Adrenal gland (tissue), 19 donors: ENCODE measurements at regions of chr5 and their contacts with region 1.

Region 1: DNA sequence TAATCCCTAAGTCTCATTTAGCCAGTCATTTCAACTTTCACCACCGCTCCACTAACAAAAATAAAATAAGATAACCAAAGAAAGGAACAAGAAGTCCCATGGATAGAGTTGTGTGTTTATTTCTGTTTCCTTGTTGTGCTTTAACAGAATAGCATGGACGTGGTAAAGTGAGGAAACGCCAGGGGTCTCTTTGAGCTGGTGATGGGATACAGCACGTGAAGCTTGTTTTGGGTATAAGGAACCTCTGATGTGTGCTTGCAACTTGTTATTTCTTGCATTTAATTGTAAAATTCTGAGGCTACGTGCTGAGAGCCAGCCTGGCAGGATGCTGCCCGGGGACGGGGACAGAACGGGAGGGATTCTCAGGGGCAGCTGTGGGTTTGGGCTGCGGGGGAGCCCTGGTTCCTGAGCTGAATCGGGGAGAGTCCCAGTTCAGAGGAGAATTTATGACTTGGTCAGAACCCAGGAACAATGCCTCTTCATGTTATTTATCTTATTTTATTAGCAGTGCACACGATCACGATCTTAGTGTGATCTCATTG is 63.4 kb downstream of the ANKRD33B start:
- DNase-seq: no peak
- H3K4me3 ChIP-seq: peak overlapping the region in 1 of 4 donors; percentile 8
- H3K27ac ChIP-seq: peak overlapping the region in 2 of 5 donors; percentile 3 to 18
- H3K4me1 ChIP-seq: peaks cover 0 to 8% of the 10 kb centered on the region in 2 donors
- H3K27me3 ChIP-seq: no peaks in the 10 kb centered on the region
- CTCF ChIP-seq: no peak
- POLR2A ChIP-seq: no peak

Region 2: GRCh38 chr5:10283927-10284635 is 343.1 kb before region 1 on chr5:
- intact Hi-C with region 1: loop called in 1 of 2 experiments (anchors 10 kb)
- DNase-seq: peak; percentile 76 to 94 (median 84)
- H3K4me3 ChIP-seq: no peak overlapping the region
- H3K27ac ChIP-seq: no peak overlapping the region
- H3K4me1 ChIP-seq: peaks cover 6% of the 10 kb centered on the region in 2 donors
- H3K27me3 ChIP-seq: no peaks in the 10 kb centered on the region
- CTCF ChIP-seq: peak; percentile 86 to 95 (median 89)
- POLR2A ChIP-seq: no peak

Region 3: DNA sequence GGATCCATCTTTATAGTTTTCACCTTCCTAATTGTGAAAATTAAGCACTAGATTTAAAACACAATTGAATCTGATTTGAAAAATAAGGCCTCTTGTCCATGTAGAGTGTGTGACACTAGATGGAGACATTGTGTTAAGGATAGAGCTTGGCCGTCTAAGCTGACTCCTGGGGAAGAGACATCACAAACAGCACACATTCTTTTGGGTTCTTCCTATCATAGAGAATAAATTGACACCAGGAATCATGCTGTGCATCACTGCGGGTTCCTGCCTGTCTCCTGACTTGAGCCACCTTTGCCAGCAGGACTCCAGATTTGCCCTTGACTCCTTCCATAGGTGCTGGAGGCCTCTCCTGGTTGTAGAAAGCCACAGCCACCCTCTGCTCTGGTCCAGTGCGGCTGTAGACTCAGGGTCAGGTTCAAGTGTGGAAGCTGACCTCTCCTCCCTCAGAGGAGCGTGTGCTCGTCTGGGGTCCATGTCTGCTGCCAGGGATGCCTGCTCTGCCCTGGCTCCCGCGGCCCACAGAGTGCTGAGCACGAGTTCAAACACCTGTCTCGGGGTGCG is 174.4 kb before region 1 on chr5:
- intact Hi-C with region 1: loop called (anchors 2 kb)
- DNase-seq: peak in 3 of 7 donors; percentile 27 to 38 (median 28)
- H3K4me3 ChIP-seq: no peak overlapping the region
- H3K27ac ChIP-seq: no peak overlapping the region
- H3K4me1 ChIP-seq: no peaks in the 10 kb centered on the region
- H3K27me3 ChIP-seq: no peaks in the 10 kb centered on the region
- CTCF ChIP-seq: peak; percentile 34 to 77 (median 74)
- POLR2A ChIP-seq: no peak

Region 4: DNA sequence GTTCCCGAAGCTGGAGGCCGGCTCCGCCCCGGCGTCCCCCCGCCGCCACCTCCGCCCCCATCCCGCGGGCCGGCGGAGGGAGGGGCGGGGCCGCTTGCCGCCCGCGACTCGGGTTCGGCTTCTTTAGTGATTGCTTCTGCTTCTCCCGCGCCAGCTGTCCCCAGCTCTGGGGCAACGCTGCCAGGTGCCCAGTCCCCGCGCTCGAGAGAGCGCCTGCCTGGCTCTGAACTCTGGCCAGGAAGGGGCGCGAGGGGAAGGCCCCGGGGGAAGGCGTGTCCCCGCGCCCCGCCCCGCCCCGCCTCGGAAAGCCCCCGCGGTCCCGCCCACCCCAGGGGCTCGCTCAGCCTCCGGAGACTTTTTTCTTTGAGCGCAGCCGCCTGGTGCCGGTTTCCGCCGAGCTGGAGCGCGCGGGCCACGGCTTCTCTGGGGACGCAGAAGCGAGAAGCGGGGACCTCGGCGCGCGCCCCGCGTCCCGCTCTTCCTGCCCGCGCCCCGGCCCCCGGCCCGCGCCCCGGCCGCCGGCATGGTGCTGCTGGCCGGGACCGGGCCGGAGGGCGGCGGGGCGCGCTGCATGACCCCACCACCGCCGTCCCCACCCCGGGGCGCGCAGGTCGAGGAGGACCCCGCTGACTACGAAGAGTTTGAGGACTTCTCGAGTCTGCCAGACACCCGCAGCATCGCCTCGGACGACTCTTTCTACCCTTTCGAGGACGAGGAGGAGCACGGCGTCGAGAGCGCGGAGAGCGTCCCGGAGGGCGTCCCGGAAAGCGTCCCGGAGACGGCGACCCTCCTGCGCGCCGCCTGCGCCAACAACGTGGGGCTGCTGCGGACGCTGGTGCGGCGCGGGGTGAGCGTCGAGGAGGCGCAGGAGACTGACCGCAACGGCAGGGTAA is 63.0 kb before region 1 on chr5 and contains the start of gene ANKRD33B:
- intact Hi-C with region 1: loop called in 1 of 2 experiments (anchors 10 kb)
- DNase-seq: no peak
- H3K4me3 ChIP-seq: peak within 1 kb of the TSS in 2 of 4 donors; percentile 43 to 61
- H3K27ac ChIP-seq: no peak within 1 kb of the TSS
- H3K4me1 ChIP-seq: peaks cover 11 to 22% of the 10 kb centered on the region in 2 donors
- H3K27me3 ChIP-seq: peaks cover 37% of the 10 kb centered on the region
- CTCF ChIP-seq: no peak
- POLR2A ChIP-seq: no peak
- total RNA-seq, gene ANKRD33B: 0.14 to 0.69 (median 0.24) TPM